Activated B cell treated with CpG ODN at 0.5 μM for 24 hours (primary cell): ENCODE measurements at regions of chr4 and their contacts with region 1.

Region 1: GRCh38 chr4:10461091-10461849 is 4.0 kb upstream of the ZNF518B start:
- DNase-seq: peak; percentile 79
- ATAC-seq: peak; percentile 85
- H3K4me3 Mint-ChIP-seq: peak overlapping the region; percentile 78
- H3K27ac Mint-ChIP-seq: no peak overlapping the region
- H3K4me1 Mint-ChIP-seq: peaks cover 19% of the 10 kb centered on the region
- H3K27me3 Mint-ChIP-seq: peaks cover 51% of the 10 kb centered on the region
- CTCF ChIP-seq: peak; percentile 83

Region 2: DNA sequence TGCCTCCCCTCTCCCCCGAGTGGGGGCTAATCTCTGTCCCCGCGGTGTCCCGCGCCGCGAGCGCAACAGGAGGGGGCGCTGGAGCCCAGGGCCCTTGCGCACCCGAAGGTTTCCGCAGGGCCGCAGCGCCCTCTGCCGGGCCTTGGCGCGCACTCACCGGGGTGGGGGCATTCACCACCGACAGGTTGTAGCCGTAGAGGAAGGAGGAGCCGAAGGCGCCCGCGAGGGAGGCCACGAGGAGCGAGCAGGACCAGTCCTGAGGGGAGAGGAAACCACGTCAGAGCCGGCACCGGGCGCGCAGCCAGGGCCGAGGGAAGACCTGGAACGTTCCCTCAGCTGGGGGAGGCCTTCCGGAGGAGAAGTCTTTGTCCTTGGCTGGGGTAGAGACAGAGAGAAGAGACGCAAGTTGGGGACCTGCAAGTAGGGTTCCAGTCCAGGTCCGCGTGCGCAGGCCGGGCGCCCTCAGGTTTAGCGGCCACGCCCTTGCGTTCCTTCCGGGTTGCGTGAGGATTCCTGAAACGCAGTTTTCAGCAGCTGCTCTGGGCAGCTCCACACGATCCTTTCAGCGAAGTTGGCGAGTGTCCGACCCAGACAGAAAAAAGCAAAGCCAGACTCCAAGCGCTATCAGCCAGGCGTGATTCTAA is 442.3 kb before region 1 on chr4:
- CTCF ChIA-PET with region 1: no interaction called
- POLR2A ChIA-PET with region 1: no interaction called
- intact Hi-C with region 1: loop called (anchors 1 kb)
- DNase-seq: peak; percentile 85
- ATAC-seq: peak; percentile 99
- H3K4me3 Mint-ChIP-seq: peak overlapping the region; percentile 90
- H3K27ac Mint-ChIP-seq: peak overlapping the region; percentile 88
- H3K4me1 Mint-ChIP-seq: peaks cover 37% of the 10 kb centered on the region
- H3K27me3 Mint-ChIP-seq: no peaks in the 10 kb centered on the region
- CTCF ChIP-seq: peak; percentile 69

Region 3: GRCh38 chr4:10157478-10158332 is 303.6 kb before region 1 on chr4:
- CTCF ChIA-PET with region 1: interaction called, 3 read pairs
- POLR2A ChIA-PET with region 1: no interaction called
- intact Hi-C with region 1: loop called (anchors 5 kb)
- DNase-seq: no peak
- ATAC-seq: peak; percentile 79
- H3K4me3 Mint-ChIP-seq: no peak overlapping the region
- H3K27ac Mint-ChIP-seq: no peak overlapping the region
- H3K4me1 Mint-ChIP-seq: peaks cover 2% of the 10 kb centered on the region
- H3K27me3 Mint-ChIP-seq: peaks cover 24% of the 10 kb centered on the region
- CTCF ChIP-seq: no peak

Region 4: DNA sequence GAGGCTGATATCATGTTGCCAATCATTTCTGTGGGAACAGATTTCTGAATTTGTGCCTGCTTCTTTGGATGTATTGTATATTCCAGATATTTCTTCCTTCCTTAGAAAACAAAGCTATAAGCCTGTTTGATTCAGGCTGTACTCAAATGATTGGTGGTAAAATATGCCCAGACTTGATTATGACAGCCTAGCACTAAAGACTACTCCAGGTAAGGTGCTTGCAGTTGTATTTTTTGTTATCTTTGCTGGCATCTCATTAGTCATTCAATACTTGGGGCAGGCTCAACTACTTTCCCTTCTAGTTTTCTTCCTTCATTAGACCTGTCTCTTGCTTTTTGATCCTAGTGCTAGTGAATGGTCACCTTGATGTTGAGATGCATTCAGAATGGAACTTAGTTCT is 94.6 kb before region 1 on chr4:
- CTCF ChIA-PET with region 1: no interaction called
- POLR2A ChIA-PET with region 1: no interaction called
- intact Hi-C with region 1: no loop called
- DNase-seq: no peak
- ATAC-seq: no peak
- H3K4me3 Mint-ChIP-seq: no peak overlapping the region
- H3K27ac Mint-ChIP-seq: no peak overlapping the region
- H3K4me1 Mint-ChIP-seq: no peaks in the 10 kb centered on the region
- H3K27me3 Mint-ChIP-seq: peaks cover 9% of the 10 kb centered on the region
- CTCF ChIP-seq: no peak

Region 5: GRCh38 chr4:10535912-10536311 is 74.6 kb after region 1 on chr4:
- CTCF ChIA-PET with region 1: interaction called, 3 read pairs
- POLR2A ChIA-PET with region 1: no interaction called
- intact Hi-C with region 1: loop called (anchors 1 kb)
- DNase-seq: no peak
- ATAC-seq: no peak
- H3K4me3 Mint-ChIP-seq: no peak overlapping the region
- H3K27ac Mint-ChIP-seq: no peak overlapping the region
- H3K4me1 Mint-ChIP-seq: peaks cover 5% of the 10 kb centered on the region
- H3K27me3 Mint-ChIP-seq: peaks cover 7% of the 10 kb centered on the region
- CTCF ChIP-seq: no peak

Region 6: GRCh38 chr4:11106190-11106589 is 644.9 kb after region 1 on chr4:
- CTCF ChIA-PET with region 1: no interaction called
- POLR2A ChIA-PET with region 1: no interaction called
- intact Hi-C with region 1: loop called (anchors 5 kb)
- DNase-seq: no peak
- ATAC-seq: no peak
- H3K4me3 Mint-ChIP-seq: no peak overlapping the region
- H3K27ac Mint-ChIP-seq: no peak overlapping the region
- H3K4me1 Mint-ChIP-seq: peaks cover 44% of the 10 kb centered on the region
- H3K27me3 Mint-ChIP-seq: no peaks in the 10 kb centered on the region
- CTCF ChIP-seq: no peak